H1 (cell line): ENCODE measurements at regions of chr12 and their contacts with region 1.

Region 1: GRCh38 chr12:93536766-93537488 is 35.5 kb upstream of the SOCS2 start:
- DNase-seq: no peak
- H3K4me3 ChIP-seq: no peak overlapping the region
- H3K27ac ChIP-seq: no peak overlapping the region
- H3K4me1 ChIP-seq: peaks cover 0 to 3% (median 0%) of the 10 kb centered on the region in 4 experiments; a peak in 1 of 7 replicates
- H3K27me3 ChIP-seq: no peaks in the 10 kb centered on the region
- CTCF ChIP-seq: no peak
- EP300 ChIP-seq: no peak
- POLR2A ChIP-seq: no peak
- RAD21 ChIP-seq: no peak

Region 2: DNA sequence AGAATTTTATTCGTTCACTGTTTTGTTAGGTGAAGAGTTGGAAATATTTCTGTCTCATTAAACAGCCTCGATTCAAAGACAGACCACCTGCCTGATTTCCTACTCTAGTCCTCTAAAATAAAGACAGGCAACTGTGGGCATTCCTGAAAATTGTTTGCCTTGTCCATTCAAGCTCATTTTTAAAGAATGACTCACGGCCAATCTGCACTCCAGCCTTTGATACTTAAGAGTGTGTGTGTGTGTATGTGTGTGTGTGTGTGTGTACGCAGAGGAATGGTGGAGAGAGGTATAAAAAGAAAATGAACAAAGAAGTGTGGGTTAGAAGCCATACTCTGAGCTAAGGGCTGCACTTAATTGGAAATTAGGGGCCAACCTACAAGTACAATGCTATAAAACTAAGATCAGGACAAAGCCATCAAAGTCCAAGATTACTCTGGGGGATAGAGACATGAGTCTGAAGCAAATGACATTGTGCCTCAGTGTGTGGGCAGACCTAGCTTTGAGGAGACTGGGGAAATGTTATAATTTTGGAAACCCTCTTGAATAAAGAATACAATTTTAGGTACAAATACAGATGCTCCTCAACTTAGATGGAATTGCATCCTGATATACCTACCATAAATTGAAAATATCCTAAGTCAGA is 10.0 kb before region 1 on chr12:
- CTCF ChIA-PET with region 1: interaction called, 13 read pairs
- POLR2A ChIA-PET with region 1: no interaction called
- DNase-seq: no peak
- H3K4me3 ChIP-seq: no peak overlapping the region
- H3K27ac ChIP-seq: no peak overlapping the region
- H3K4me1 ChIP-seq: no peaks in the 10 kb centered on the region
- H3K27me3 ChIP-seq: no peaks in the 10 kb centered on the region
- CTCF ChIP-seq: no peak
- EP300 ChIP-seq: no peak
- POLR2A ChIP-seq: no peak
- RAD21 ChIP-seq: no peak

Region 3: GRCh38 chr12:93785262-93786010 is 248.5 kb after region 1 on chr12:
- CTCF ChIA-PET with region 1: no interaction called
- POLR2A ChIA-PET with region 1: no interaction called
- DNase-seq: peak in 1 of 2 experiments; percentile 29
- H3K4me3 ChIP-seq: no peak overlapping the region
- H3K27ac ChIP-seq: no peak overlapping the region
- H3K4me1 ChIP-seq: peaks cover 0 to 11% (median 3%) of the 10 kb centered on the region in 4 experiments; a peak in 2 of 7 replicates
- H3K27me3 ChIP-seq: no peaks in the 10 kb centered on the region
- CTCF ChIP-seq: no peak
- EP300 ChIP-seq: no peak
- POLR2A ChIP-seq: no peak
- RAD21 ChIP-seq: no peak